ENCODE measurements at regions of chr10 and their contacts with region 1.

Region 1: GRCh38 chr10:99172130-99172738 is 63.4 kb downstream of the HPSE2 start:
- DNase-seq: peak; percentile 14 to 46 (median 24)
- ATAC-seq: peak; percentile 67; the same call in 2 of the 3 replicates
- H3K4me3 ChIP-seq: no peak overlapping the region
- H3K27ac ChIP-seq: no peak overlapping the region
- H3K4me1 ChIP-seq: no peaks in the 10 kb centered on the region
- H3K27me3 ChIP-seq: no peaks in the 10 kb centered on the region
- CTCF ChIP-seq: peak; percentile 51 to 63 (median 55); a peak in 5 of 6 replicates
- EP300 ChIP-seq: no peak
- POLR2A ChIP-seq: no peak
- RAD21 ChIP-seq: peak; percentile 62 to 63

Region 2: GRCh38 chr10:99057936-99058690 is 114.1 kb before region 1 on chr10:
- CTCF ChIA-PET with region 1: no interaction called
- POLR2A ChIA-PET with region 1: no interaction called
- in situ Hi-C with region 1: no loop called
- intact Hi-C with region 1: loop called (anchors 10 kb)
- DNase-seq: no peak
- ATAC-seq: no peak
- H3K4me3 ChIP-seq: no peak overlapping the region
- H3K27ac ChIP-seq: no peak overlapping the region
- H3K4me1 ChIP-seq: no peaks in the 10 kb centered on the region
- H3K27me3 ChIP-seq: no peaks in the 10 kb centered on the region
- CTCF ChIP-seq: no peak
- EP300 ChIP-seq: no peak
- POLR2A ChIP-seq: no peak
- RAD21 ChIP-seq: no peak

Region 3: GRCh38 chr10:99248824-99249223 is 76.6 kb after region 1 on chr10:
- CTCF ChIA-PET with region 1: no interaction called
- POLR2A ChIA-PET with region 1: no interaction called
- in situ Hi-C with region 1: no loop called
- intact Hi-C with region 1: loop called (anchors 5 kb)
- DNase-seq: no peak
- ATAC-seq: no peak
- H3K4me3 ChIP-seq: no peak overlapping the region
- H3K27ac ChIP-seq: no peak overlapping the region
- H3K4me1 ChIP-seq: no peaks in the 10 kb centered on the region
- H3K27me3 ChIP-seq: no peaks in the 10 kb centered on the region
- CTCF ChIP-seq: no peak
- EP300 ChIP-seq: no peak
- POLR2A ChIP-seq: no peak
- RAD21 ChIP-seq: no peak